ENCODE measurements at regions of chr12 and their contacts with region 1.

Region 1: GRCh38 chr12:12081836-12082497 is 11.2 kb downstream of the BCL2L14 start:
- DNase-seq: peak; percentile 33
- H3K4me3 ChIP-seq: no peak overlapping the region
- H3K27ac ChIP-seq: no peak overlapping the region
- H3K27me3 ChIP-seq: no peaks in the 10 kb centered on the region
- CTCF ChIP-seq: peak; percentile 43

Region 2: DNA sequence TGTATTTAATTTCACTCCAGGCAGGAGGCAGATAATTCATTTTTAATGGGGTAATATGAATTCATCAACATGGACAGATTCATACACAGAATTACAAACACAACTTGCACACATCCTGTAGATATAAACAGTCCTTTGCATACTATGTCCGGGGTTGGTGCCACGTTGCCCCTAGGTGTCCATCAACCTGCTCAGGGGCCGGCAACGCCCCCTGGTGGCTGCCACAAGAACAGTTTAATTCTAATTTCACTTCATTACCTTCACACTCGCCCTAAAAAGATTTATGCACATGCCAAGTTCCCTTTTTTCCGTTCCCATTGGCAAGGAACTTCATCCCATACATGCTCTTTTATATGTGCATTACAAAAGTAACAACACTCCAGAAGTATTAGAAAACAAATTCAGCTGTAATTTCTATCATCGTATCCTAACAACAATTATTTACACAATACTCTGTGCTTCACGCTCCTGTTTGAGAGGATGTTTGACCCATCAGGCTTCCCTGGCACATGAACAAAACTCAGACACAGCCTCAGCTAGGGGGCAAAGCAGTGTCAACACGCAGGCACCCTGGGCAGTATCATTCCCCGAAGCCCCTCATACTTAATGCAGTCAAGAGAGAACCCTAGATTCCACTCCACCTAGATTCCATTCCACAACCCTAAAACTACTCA is 252.5 kb after region 1 on chr12:
- in situ Hi-C with region 1: loop called (anchors 25 kb)
- DNase-seq: peak; percentile 18
- H3K4me3 ChIP-seq: no peak overlapping the region
- H3K27ac ChIP-seq: no peak overlapping the region
- H3K27me3 ChIP-seq: no peaks in the 10 kb centered on the region
- CTCF ChIP-seq: peak; percentile 82